Activated CD4-positive, alpha-beta memory T cell treated with anti-CD3 and anti-CD28 coated beads, Interleukin-2, amount 10 ng/mL, durations not matched to agents 7 days and 5 days (primary cell): ENCODE measurements at regions of chr14 and their contacts with region 1.

Region 1: DNA sequence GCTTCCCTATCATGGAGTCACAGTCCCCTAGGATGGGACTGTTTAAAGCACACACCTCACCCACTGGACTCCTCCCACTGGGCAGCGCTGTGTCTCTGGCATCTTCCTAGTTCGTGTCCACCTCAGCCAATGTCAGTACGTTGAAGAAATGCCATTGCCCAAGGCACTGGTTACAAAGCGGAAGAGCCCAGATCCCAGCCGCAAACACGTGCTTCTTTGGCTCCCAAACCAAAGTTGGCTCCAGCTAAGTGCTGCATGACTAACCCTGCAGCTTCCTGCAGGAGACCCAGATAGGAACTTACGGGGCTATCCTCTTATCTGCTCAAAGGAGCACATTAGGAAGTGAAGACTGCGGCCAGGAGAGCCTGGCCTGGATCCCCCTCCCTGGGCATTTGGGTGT is 9.3 kb downstream of the SYNE3 start:
- DNase-seq: no peak
- H3K4me3 Mint-ChIP-seq: no peak overlapping the region
- H3K27ac Mint-ChIP-seq: peak overlapping the region; percentile 67
- H3K4me1 Mint-ChIP-seq: peaks cover 85% of the 10 kb centered on the region
- H3K27me3 Mint-ChIP-seq: no peaks in the 10 kb centered on the region

Region 2: DNA sequence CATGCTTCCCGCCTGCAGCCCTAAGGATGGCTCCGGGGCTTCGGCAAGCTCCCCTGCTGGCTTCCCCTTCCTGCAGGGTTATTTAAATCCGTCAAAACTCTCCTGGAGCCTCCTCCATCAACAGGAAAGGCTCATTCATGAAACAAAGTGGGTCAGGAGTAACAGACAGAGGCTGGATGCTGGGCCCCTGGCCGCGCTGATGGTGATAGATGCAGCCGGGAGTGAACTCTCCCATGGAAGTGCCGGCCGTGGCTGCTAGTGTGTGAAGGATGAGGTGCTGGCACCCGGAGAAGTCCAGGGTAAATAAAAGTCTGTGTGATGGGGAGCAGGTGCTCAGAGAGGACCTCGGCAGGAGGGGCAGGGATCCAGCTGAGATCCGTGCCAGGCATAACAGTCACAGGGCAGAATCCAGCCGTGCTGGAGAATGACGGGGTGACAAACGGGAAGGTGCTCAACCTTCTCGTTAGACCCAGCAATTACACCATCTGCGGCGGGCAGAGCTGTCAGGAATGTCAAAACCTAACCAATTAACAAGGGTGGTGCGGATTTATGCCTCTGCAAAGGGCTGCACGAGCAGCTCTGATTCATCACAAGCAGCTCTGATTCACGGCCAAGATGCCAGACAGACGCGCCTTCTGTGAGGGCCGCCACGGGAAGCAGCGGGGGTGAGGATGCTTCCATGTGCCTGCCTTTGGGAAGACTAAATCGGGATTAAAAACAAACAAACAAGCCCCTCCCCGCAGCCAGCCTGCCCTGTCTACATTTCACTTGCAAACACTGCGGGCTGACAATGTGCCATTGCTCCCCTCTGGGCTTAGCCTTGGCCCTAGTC is 46.3 kb before region 1 on chr14:
- CTCF ChIA-PET with region 1: no interaction called
- POLR2A ChIA-PET with region 1: no interaction called
- DNase-seq: no peak
- H3K4me3 Mint-ChIP-seq: no peak overlapping the region
- H3K27ac Mint-ChIP-seq: peak overlapping the region; percentile 26
- H3K4me1 Mint-ChIP-seq: peaks cover 35% of the 10 kb centered on the region
- H3K27me3 Mint-ChIP-seq: no peaks in the 10 kb centered on the region

Region 3: DNA sequence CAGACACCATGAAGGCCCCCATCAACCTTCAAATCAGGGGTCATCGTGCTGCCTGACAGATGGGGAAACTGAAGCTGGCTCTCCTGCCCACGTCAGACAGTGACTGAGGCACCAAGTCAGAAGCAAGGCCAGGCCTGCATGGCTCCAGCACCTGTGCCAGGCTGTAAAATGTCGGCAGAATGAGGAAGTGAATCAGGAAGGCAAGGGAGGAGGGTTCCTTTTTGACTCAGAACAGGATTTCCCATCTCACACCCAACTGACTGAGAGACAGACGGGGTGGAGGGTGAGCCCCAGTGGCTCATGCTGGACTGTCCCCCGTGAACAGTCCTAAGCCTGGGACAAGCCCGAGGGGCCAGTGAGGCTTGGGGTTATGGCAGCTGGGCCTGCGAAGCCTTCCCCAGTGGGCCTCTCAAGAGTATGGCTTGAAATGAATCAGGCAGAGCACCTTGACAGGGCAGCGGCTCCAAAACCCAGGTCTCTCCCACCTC is 11.6 kb before region 1 on chr14:
- CTCF ChIA-PET with region 1: interaction called, 7 read pairs
- POLR2A ChIA-PET with region 1: interaction called, 18 read pairs
- DNase-seq: peak; percentile 41
- H3K4me3 Mint-ChIP-seq: peak overlapping the region; percentile 36
- H3K27ac Mint-ChIP-seq: peak overlapping the region; percentile 88
- H3K4me1 Mint-ChIP-seq: peaks cover 77% of the 10 kb centered on the region
- H3K27me3 Mint-ChIP-seq: no peaks in the 10 kb centered on the region